Heart left ventricle (tissue), 16 donors: ENCODE measurements at regions of chr1 and their contacts with region 1.

Region 1: DNA sequence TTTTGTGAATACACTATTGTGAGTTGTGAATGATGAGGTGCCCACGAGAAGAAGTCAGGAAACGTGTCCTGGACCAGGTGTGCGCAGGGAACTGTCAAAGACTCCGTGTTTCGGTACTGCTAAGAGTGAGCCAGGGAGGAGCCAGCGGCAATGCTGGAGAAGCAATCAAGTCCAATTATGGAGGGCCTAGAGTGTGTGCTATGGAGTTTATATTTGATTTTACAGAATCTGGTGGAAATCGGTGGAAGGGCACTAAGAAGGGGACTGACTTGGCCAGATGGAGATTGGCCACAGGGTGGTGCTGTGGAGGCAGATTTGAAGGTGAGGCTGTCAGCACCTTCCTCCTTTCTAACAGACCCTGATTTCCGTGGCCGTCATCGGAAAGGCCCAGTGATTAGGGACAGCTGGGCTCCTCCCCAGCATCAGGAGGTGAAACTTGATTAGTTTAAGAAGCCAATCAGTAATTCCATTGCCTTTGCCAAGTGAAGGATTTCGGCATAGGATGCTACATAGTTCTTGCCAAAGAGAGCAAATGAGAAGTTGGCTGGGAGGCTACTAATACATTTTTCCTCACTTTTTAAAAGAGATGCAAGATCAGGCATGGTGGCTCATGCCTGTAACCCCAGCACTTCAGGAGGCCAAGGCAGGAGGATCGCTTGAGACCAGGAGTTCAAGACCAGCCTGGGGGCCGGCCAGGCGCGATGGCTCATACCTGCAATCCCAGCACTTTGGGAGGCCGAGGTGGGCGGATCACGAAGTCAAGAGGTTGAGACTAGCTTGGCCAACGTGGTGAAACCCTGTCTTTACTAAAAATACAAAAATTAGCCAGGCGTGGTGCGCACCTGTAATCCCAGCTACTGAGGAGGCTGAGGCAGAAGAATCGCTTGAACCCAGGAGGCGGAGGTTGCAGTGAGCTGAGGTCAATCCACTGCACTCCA is 7.0 kb downstream of the PTCH2 start:
- DNase-seq: peak; percentile 82 to 89 (median 86)
- ATAC-seq: peak; percentile 65 to 89 (median 87)
- H3K4me3 ChIP-seq: no peak overlapping the region
- H3K27ac ChIP-seq: no peak overlapping the region
- H3K4me1 ChIP-seq: peaks cover 0 to 14% (median 3%) of the 10 kb centered on the region in 12 donors
- H3K27me3 ChIP-seq: no peaks in the 10 kb centered on the region
- CTCF ChIP-seq: peak; percentile 78 to 93 (median 86)
- POLR2A ChIP-seq: no peak

Region 2: DNA sequence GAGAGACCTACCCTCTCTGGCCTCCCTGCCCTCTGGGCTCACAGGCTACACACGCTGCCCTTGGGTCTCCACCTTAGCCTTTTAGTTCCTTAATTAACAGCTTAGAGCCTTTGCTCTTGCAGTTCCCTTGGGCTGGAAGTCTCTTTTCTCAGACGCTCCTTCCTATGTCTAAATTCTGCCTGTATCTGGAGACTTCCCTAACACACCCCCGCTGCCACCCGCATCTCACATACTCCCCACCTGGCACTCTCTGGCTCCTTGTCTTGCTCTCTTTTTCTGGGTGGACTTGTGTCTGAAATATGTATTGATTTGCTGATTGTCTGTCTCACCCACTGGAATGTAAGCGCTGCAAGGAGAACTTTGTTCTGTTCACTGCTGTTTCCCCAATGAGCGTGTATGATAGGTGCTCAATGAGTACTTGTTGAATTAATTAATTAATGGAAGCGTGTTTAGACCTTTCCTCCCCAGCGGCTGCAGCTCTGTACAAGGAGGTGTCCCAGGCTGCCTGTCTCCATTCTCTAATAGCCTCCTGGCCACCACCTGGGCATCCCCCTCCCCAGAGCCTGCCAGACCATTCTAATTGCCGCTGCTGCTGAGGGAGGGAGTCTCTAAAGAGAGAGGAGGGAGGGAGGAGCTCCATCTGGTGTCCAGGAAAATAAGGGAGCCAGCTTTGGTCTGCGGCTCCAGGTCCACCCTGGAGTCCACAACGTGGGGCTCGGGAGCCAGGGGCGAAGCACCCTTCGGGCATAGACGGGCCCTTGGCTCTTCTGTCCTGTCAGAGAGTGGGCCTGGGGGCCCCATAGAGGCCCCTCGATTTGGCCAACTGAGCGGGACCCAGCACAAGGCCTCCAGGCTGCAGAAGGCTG is 335.6 kb before region 1 on chr1:
- intact Hi-C with region 1: no loop called
- DNase-seq: peak in 2 of 5 donors; percentile 16 to 28
- ATAC-seq: peak; percentile 25 to 79 (median 64)
- H3K4me3 ChIP-seq: peak overlapping the region in 5 of 12 donors; percentile 10 to 36 (median 24)
- H3K27ac ChIP-seq: peak overlapping the region in 2 of 12 donors; percentile 26 to 41
- H3K4me1 ChIP-seq: peaks cover 0 to 36% (median 9%) of the 10 kb centered on the region in 12 donors
- H3K27me3 ChIP-seq: peaks cover 0 to 6% (median 0%) of the 10 kb centered on the region in 9 donors
- CTCF ChIP-seq: peak; percentile 29 to 65 (median 52)
- POLR2A ChIP-seq: no peak

Region 3: GRCh38 chr1:44786138-44786840 is 49.7 kb before region 1 on chr1:
- intact Hi-C with region 1: loop called in 2 of 10 experiments (anchors 5 to 10 kb)
- DNase-seq: peak; percentile 64 to 87 (median 68)
- ATAC-seq: peak; percentile 56 to 77 (median 71)
- H3K4me3 ChIP-seq: peak overlapping the region; percentile 2 to 63 (median 52)
- H3K27ac ChIP-seq: peak overlapping the region in 11 of 12 donors; percentile 11 to 68 (median 53)
- H3K4me1 ChIP-seq: peaks cover 0 to 33% (median 25%) of the 10 kb centered on the region in 12 donors
- H3K27me3 ChIP-seq: no peaks in the 10 kb centered on the region
- CTCF ChIP-seq: peak; percentile 93 to 99 (median 98)
- POLR2A ChIP-seq: no peak

Region 4: GRCh38 chr1:44792783-44793714 is 43.0 kb before region 1 on chr1:
- intact Hi-C with region 1: loop called in 6 of 10 experiments (anchors 5 to 10 kb)
- DNase-seq: no peak
- ATAC-seq: peak in 1 of 4 donors; percentile 5
- H3K4me3 ChIP-seq: no peak overlapping the region
- H3K27ac ChIP-seq: no peak overlapping the region
- H3K4me1 ChIP-seq: no peaks in the 10 kb centered on the region
- H3K27me3 ChIP-seq: no peaks in the 10 kb centered on the region
- CTCF ChIP-seq: no peak
- POLR2A ChIP-seq: no peak

Region 5: DNA sequence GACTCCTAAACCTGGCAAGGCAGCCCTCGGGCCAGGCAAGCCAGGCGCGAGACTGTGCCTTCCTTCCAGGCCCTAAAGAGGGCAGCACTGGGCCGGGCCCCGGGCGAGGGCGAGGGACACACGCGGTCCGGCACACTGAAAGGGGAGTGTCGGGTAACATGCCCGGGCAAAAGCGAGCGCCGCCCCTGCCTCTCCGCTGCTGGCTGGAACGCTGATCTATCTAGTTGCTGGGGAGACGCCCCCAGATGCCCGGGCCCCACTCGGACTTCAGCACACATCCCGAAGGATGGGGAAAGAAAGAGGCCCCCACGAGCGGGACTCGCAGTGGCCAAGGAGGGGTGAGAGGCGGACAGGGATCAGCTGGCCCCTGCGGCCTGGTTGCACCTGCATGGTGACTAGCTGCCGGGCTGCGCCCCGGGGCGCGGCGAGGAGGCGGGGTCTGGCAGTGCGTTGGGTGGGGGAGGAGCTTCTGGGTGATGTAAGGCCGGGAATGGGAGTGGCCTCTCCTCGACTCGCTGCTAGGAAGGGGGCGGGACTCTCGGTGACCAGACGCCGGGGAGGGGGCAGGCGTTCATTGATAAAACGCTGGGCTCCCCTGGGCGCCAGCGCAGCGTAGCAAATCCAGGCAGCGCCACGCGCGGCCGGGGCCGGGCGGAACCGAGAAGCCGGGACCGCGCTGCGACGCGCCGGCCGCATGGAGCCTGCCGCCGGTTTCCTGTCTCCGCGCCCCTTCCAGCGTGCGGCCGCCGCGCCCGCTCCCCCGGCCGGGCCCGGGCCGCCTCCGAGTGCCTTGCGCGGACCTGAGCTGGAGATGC is 36.0 kb before region 1 on chr1 and contains the start of gene PLK3:
- intact Hi-C with region 1: loop called in 4 of 10 experiments (anchors 5 kb)
- DNase-seq: peak; percentile 98 to 99 (median 99)
- ATAC-seq: peak; percentile 96 to 98 (median 97)
- H3K4me3 ChIP-seq: peak within 1 kb of the TSS; percentile 67 to 97 (median 88)
- H3K27ac ChIP-seq: peak within 1 kb of the TSS; percentile 77 to 98 (median 94)
- H3K4me1 ChIP-seq: peaks cover 3 to 45% (median 31%) of the 10 kb centered on the region in 12 donors
- H3K27me3 ChIP-seq: no peaks in the 10 kb centered on the region
- CTCF ChIP-seq: peak; percentile 89 to 98 (median 94)
- POLR2A ChIP-seq: peak; percentile 70 to 99
- total RNA-seq, gene PLK3: 4.5 to 17.9 (median 6.6) TPM

Region 6: DNA sequence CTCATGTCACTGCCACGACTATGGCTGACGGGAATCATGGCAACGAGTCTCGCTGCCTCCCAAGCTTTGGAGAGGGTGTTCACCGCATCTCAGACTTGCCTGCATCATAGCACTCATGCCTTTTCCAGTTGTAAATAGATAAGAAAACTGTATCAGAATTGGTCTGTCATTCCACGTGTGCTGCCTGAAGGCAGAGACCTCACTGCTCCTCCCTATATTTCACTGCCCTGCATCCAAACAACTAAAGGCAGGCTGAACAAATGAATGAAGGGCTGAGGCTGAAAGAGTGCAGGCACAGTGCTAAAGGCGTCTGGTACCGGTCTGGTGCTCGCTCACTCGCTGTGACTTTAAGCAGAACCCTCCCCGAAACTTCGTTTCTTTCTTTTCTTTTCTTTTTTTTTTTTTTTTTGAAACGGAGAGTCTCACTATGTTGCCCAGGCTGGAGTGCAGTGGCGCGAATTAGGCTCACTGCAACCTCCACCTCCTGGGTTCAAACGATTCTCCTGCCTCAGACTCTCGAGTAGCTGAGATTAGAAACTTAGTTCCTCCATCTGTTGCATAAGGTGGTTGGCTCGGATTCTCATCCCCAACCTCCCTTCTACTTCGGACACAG is 149.8 kb after region 1 on chr1:
- intact Hi-C with region 1: loop called in 3 of 10 experiments (anchors 5 to 10 kb)
- DNase-seq: no peak
- ATAC-seq: peak in 2 of 4 donors; percentile 18 to 63
- H3K4me3 ChIP-seq: peak overlapping the region; percentile 54 to 92 (median 74)
- H3K27ac ChIP-seq: peak overlapping the region in 11 of 12 donors; percentile 39 to 84 (median 78)
- H3K4me1 ChIP-seq: peaks cover 2 to 23% (median 10%) of the 10 kb centered on the region in 12 donors
- H3K27me3 ChIP-seq: no peaks in the 10 kb centered on the region
- CTCF ChIP-seq: no peak
- POLR2A ChIP-seq: no peak